Spleen (tissue), 13 donors: ENCODE measurements at regions of chr22 and their contacts with region 1.

Region 1: DNA sequence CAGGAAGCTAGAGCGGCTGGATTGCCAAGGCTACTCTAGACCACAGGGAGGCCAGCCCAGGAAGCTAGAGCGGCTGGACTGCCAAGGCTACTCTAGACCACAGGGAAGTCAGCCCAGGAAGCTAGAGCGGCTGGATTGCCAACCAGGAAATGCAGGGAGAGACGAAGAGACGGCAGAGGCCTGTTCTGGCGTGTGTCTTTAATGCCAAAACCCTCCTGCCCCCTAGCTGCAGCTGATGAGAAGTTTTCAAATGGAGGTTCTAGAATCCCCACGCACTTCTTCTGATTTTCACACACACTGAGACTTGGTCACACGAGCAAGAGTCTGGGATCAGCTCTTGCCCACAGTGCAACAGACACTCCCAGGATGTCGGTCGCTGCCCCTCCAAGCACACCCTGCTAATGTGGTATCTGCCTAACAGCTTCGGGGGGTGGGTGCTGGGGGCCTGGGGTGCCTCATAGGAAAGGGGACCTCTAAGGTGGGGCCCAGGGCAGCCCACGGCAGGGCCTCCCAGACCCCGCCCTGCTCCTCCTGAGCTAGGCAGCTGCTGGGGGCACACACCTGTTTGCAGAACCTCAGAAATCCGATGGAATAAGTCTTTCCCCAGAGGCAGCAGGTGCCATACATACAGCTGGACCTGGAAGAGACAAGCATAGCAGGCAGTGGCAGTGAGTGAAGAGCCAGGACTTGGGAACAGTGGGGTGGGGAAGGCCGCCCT is 28.5 kb downstream of the MAFF start:
- DNase-seq: no peak
- H3K4me3 ChIP-seq: no peak overlapping the region
- H3K27ac ChIP-seq: peak overlapping the region in 7 of 8 donors; percentile 36 to 69 (median 56)
- H3K4me1 ChIP-seq: peaks cover 0 to 31% (median 20%) of the 10 kb centered on the region in 6 donors
- H3K27me3 ChIP-seq: no peaks in the 10 kb centered on the region
- CTCF ChIP-seq: peak in 9 of 11 experiments; percentile 14 to 50 (median 41)
- POLR2A ChIP-seq: no peak

Region 2: DNA sequence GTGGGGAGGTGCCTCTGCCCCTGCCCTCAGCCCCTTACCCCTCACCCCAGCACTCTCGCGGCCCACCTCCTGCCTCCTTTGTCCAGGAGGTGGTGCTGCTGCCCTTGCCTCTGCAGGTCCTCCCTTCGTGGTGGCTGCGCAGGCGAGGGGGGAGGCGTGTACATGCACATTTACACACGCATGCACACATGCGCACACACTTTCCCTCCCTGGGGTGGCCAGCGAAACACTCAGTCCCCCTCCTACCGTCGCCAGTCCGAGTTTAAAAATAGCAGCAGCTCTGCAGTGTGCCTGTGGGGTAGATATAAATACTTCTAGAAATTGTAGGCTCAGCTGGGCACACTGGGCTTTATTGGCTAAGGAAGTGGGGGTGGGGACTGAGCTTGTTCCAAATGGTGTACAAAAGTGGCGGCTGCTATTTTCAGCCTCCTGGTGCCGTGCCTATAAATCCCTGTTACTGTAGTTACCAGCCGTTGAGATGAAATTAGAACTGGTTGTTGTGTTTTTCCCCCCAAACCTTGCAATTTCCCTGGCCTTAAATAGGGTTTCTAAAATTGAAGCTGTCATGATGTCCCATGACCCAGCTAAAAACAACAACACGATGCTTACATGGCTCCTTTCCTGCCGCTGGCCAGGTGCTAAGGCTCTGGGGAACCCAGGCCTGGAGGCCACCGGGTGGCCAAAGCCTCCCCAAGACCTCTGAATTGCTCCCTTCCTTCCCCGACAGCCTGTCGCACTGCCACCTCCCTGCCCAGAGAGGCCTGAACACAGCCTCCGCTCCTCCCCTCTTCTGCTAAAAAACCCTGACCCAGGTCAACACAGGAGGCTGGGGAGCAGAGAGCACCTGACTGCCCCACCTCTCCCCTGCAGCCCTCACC is 160.7 kb before region 1 on chr22:
- intact Hi-C with region 1: loop called (anchors 10 kb)
- DNase-seq: no peak
- H3K4me3 ChIP-seq: no peak overlapping the region
- H3K27ac ChIP-seq: peak overlapping the region in 1 of 8 donors; percentile 8
- H3K4me1 ChIP-seq: no peaks in the 10 kb centered on the region
- H3K27me3 ChIP-seq: no peaks in the 10 kb centered on the region
- CTCF ChIP-seq: peak in 5 of 11 experiments; percentile 6 to 38 (median 30)
- POLR2A ChIP-seq: no peak

Region 3: DNA sequence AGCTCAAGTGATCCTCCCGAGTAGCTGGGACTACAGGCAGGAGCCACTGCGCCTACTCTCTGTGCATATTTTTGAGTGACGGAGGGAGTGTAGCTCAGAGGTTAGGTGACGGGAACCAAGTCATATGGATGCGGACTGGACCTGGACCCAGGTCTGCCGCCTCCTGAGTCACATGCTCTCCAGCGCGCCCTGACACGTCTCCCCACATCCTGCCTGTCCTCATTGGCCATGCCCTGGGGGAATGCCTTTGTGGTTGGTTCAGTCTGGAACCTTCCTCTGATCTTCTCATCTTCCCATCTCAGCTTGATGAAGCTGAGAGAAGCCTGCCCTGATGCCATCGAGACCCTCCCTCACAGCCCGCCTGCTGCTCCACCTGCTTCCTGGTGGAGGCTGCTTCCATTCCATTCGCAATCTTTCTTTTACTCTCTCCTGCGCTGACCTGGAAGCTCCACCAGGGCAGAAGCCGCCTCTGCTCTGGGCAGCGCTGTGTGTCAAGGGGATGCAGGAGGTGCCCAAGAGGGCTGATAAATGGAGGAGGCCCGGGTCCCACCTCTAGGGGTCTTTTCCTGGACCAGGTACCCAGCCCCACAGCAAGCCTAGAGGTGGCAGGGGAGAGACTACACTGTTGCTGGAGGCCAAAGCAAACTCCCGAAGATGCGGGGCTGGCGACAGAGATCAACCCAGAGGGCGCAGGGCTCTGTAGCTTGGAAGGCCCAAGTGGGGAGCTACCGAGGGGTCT is 105.9 kb before region 1 on chr22:
- intact Hi-C with region 1: loop called (anchors 10 kb)
- DNase-seq: no peak
- H3K4me3 ChIP-seq: no peak overlapping the region
- H3K27ac ChIP-seq: no peak overlapping the region
- H3K4me1 ChIP-seq: no peaks in the 10 kb centered on the region
- H3K27me3 ChIP-seq: no peaks in the 10 kb centered on the region
- CTCF ChIP-seq: no peak
- POLR2A ChIP-seq: no peak

Region 4: DNA sequence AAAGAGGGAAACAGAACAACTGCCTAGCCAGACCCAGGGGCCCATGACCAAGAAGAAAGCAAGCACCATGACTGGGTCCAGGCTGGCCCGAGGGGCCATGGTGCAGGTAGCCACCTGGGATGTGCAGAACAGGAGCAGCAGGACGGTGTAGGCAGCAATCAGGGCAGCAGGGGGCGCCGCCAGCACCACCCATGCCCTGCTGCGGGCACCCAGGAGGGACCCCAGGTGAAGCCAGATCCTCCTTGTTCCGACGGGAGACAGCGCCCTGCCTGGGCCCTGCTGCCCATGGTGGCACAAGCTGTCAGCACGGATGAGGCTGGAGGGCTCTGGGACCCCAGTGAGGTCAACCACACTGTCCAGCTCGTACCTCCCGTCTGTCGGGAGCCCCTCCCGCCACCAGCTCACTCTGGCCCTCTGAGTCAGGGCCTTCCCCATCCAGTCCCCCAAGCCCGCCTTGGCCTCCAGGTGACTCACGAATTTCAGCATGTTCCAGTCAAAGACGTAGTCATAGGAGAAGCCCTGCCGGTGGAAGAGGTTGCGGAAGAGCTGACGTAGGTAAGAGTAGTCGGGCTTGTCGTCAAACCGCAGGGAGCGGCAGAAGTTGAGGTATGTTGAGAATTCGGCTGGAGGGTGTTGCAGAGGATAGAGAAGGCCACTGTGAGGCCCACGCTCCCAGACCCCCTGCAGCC is 68.2 kb after region 1 on chr22:
- intact Hi-C with region 1: no loop called
- DNase-seq: peak; percentile 74
- H3K4me3 ChIP-seq: no peak overlapping the region
- H3K27ac ChIP-seq: no peak overlapping the region
- H3K4me1 ChIP-seq: peaks cover 0 to 5% (median under 1%) of the 10 kb centered on the region in 6 donors
- H3K27me3 ChIP-seq: no peaks in the 10 kb centered on the region
- CTCF ChIP-seq: peak in 10 of 11 experiments; percentile 13 to 67 (median 42)
- POLR2A ChIP-seq: no peak